PC-3 (cell line): ENCODE measurements at regions of chr20 and their contacts with region 1.

Region 1: DNA sequence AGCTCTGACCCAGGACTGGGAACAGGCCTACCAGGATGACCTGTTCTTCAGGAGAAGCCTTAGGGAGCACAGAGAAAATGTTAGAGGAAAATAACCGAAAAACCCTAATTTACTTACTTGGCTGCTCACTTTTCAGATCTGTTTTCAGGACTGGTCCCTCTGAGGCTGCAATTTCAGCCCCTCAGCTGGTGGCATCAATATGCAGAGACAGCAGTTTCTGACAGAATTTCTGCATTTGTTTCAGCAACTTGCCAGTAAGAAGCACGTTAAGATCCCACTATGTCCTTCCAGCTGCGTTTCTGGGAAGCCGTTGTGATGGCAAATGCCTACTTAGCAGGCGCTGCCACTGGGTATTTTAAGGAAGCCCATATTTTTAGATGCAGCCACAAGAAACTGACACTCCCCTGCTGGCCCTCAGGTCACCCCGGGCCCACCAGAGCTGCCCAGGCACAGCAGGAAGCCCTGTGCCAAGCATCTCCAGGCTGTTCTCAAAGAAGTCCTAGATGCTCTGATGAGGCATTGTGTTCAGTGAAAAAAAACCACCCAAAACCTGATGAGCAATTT is 7.5 kb downstream of the YTHDF1 start:
- DNase-seq: no peak
- ATAC-seq: no peak
- H3K4me3 ChIP-seq: no peak overlapping the region
- H3K27ac ChIP-seq: no peak overlapping the region
- H3K4me1 ChIP-seq: peaks cover 22% of the 10 kb centered on the region
- H3K27me3 ChIP-seq: no peaks in the 10 kb centered on the region
- CTCF ChIP-seq: no peak

Region 2: GRCh38 chr20:63183422-63184348 is 24.7 kb before region 1 on chr20:
- CTCF ChIA-PET with region 1: no interaction called
- POLR2A ChIA-PET with region 1: no interaction called
- intact Hi-C with region 1: no loop called
- DNase-seq: peak; percentile 64
- ATAC-seq: peak; percentile 54
- H3K4me3 ChIP-seq: no peak overlapping the region
- H3K27ac ChIP-seq: no peak overlapping the region
- H3K4me1 ChIP-seq: peaks cover 7% of the 10 kb centered on the region
- H3K27me3 ChIP-seq: peaks cover 4% of the 10 kb centered on the region
- CTCF ChIP-seq: peak; percentile 93

Region 3: GRCh38 chr20:63272584-63273579 is 64.5 kb after region 1 on chr20 and contains the start of gene ARFGAP1:
- CTCF ChIA-PET with region 1: no interaction called
- POLR2A ChIA-PET with region 1: interaction called, 21 read pairs
- intact Hi-C with region 1: no loop called
- DNase-seq: peak; percentile 84
- ATAC-seq: peak; percentile 95
- H3K4me3 ChIP-seq: peak within 1 kb of the TSS; percentile 88
- H3K27ac ChIP-seq: no peak within 1 kb of the TSS
- H3K4me1 ChIP-seq: peaks cover 13% of the 10 kb centered on the region; the same call in 1 of the 2 replicates
- H3K27me3 ChIP-seq: no peaks in the 10 kb centered on the region
- CTCF ChIP-seq: no peak
- total RNA-seq, gene ARFGAP1: 75.6 and 92.0 TPM in 2 replicates

Region 4: DNA sequence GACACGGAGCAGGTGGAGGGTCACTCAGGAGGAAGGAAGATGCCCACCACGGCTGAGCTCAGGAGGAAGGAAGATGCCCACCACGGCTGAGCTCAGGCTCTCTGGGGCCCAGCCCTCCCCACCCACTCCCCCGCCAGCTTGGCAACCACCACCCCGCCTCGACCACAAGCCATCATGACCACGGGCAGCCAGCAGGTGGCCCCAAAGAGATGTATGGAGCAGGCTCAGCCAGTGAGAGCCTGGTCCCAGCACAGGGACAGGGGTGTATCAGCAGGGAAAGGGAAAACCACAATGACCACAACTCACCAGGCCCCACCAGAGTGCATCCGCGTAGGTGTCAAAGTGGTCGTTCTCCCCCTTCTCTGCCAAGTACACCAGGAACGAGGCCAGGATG is 233.7 kb after region 1 on chr20:
- CTCF ChIA-PET with region 1: no interaction called
- POLR2A ChIA-PET with region 1: no interaction called
- intact Hi-C with region 1: no loop called
- DNase-seq: peak; percentile 73
- ATAC-seq: peak; percentile 95
- H3K4me3 ChIP-seq: no peak overlapping the region
- H3K27ac ChIP-seq: no peak overlapping the region
- H3K4me1 ChIP-seq: no peaks in the 10 kb centered on the region
- H3K27me3 ChIP-seq: no peaks in the 10 kb centered on the region
- CTCF ChIP-seq: peak; percentile 64